ENCODE measurements at regions of chr7 and their contacts with region 1.

Region 1: DNA sequence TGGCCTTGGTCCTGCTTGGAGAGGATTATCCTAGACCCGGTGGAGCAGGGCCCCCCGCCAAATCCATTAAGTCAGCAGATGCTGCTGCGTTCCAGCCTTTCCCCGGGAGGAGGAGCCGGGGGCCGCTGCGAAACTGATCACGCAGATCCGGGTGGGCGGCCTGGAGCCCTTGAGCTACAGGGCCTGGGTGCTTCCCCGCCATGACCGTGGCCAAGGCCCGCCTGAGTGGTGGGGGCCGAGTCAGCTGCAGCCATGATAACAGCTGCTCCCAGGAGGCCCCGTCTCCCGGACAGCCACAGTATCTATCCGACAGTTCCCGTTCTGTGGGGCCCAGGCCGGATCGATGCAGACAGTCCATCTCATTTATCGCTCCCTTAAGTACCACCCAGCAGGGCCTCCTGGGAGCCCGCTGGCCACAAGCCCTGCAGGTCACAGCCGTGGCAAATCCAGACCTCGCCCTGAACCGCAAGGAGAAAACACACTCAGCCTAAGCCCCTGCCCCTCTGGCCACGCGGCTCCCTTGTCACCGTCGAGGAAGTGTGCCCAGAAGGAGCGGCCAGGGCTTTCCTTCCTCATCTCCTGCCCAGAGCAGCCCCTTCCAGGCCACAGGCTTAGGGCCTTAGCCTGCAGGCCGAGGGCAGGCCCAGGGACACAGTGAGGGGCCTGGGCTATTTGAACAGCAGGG is 34.4 kb upstream of the SLC29A4 start:
- DNase-seq: peak; percentile 22 to 54 (median 35)
- ATAC-seq: peak; percentile 82
- H3K4me3 ChIP-seq: no peak overlapping the region
- H3K27ac ChIP-seq: no peak overlapping the region
- H3K4me1 ChIP-seq: peaks cover 0 to 9% of the 10 kb centered on the region in 2 experiments; a peak in 3 of 5 replicates
- H3K27me3 ChIP-seq: peaks cover 5 to 23% of the 10 kb centered on the region in 2 experiments; a peak in 4 of 5 replicates
- CTCF ChIP-seq: no peak
- EP300 ChIP-seq: no peak
- POLR2A ChIP-seq: no peak
- RAD21 ChIP-seq: no peak

Region 2: GRCh38 chr7:5450549-5451372 is 202.4 kb after region 1 on chr7:
- CTCF ChIA-PET with region 1: no interaction called
- POLR2A ChIA-PET with region 1: no interaction called
- in situ Hi-C with region 1: no loop called
- intact Hi-C with region 1: loop called (anchors 10 kb)
- DNase-seq: peak; percentile 60 to 69 (median 66)
- ATAC-seq: peak; percentile 84
- H3K4me3 ChIP-seq: no peak overlapping the region
- H3K27ac ChIP-seq: no peak overlapping the region
- H3K4me1 ChIP-seq: peaks cover 19 to 52% of the 10 kb centered on the region in 2 experiments
- H3K27me3 ChIP-seq: no peaks in the 10 kb centered on the region
- CTCF ChIP-seq: peak; percentile 69 to 77 (median 75)
- EP300 ChIP-seq: no peak
- POLR2A ChIP-seq: no peak
- RAD21 ChIP-seq: peak; percentile 67 to 85

Measured in K562 (cell line).